Heart left ventricle (tissue), 16 donors: ENCODE measurements at regions of chr13 and their contacts with region 1.

Region 1: GRCh38 chr13:21060987-21061763 is at the start of gene LATS2:
- DNase-seq: peak; percentile 97 to 98 (median 98)
- ATAC-seq: peak; percentile 96 to 98 (median 96)
- H3K4me3 ChIP-seq: peak within 1 kb of the TSS; percentile 73 to 99 (median 96)
- H3K27ac ChIP-seq: peak within 1 kb of the TSS; percentile 98 to 100 (median 100)
- H3K4me1 ChIP-seq: peaks cover 0 to 53% (median 40%) of the 10 kb centered on the region in 12 donors
- H3K27me3 ChIP-seq: no peaks in the 10 kb centered on the region
- CTCF ChIP-seq: peak in 9 of 12 donors; percentile 5 to 75 (median 46)
- POLR2A ChIP-seq: peak; percentile 49 to 96
- total RNA-seq, gene LATS2: 16.6 to 35.6 (median 27.1) TPM

Region 2: DNA sequence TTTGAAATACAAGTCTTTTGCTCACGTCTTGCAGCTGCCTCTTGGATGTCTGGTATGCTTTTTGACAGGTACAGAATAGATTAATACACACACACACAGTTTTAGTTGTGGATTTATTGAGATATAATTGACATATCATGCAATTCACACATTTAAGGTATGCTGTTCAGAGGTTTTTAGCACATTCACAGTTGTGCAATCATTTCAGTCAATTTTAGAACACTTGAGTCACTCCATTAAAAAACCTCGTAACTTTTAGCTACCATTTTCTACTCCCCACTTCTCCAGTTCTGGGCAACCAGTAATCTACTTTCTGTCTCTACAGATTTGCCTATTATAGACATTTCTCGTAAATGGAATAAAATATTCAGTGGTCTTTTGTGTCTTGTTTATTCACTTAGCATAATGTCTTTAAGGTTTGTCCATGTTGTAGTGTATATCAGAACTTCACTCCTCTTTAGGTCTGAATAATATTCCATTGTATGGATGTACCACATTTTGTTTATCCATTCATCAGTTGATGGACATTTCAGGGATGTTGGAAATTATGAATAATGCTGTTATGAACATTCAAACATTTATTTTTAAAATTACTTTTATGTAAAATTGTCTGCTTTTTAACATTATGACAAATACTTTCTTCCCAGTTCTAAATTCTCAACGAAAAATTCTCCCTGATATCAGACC is 1105.2 kb before region 1 on chr13:
- intact Hi-C with region 1: no loop called
- DNase-seq: no peak
- ATAC-seq: no peak
- H3K4me3 ChIP-seq: no peak overlapping the region
- H3K27ac ChIP-seq: no peak overlapping the region
- H3K4me1 ChIP-seq: peaks cover 0 to 25% (median 14%) of the 10 kb centered on the region in 12 donors
- H3K27me3 ChIP-seq: no peaks in the 10 kb centered on the region
- CTCF ChIP-seq: no peak
- POLR2A ChIP-seq: no peak

Region 3: GRCh38 chr13:20940083-20940880 is 120.9 kb before region 1 on chr13:
- intact Hi-C with region 1: loop called in 8 of 10 experiments (anchors 1 to 10 kb)
- DNase-seq: no peak
- ATAC-seq: no peak
- H3K4me3 ChIP-seq: no peak overlapping the region
- H3K27ac ChIP-seq: peak overlapping the region in 8 of 12 donors; percentile 22 to 78 (median 44)
- H3K4me1 ChIP-seq: peaks cover 0 to 13% (median 8%) of the 10 kb centered on the region in 12 donors
- H3K27me3 ChIP-seq: peaks cover 0 to 5% (median 0%) of the 10 kb centered on the region in 9 donors
- CTCF ChIP-seq: no peak
- POLR2A ChIP-seq: no peak

Region 4: GRCh38 chr13:20945952-20946383 is 115.2 kb before region 1 on chr13:
- intact Hi-C with region 1: loop called in 8 of 10 experiments (anchors 1 to 10 kb)
- DNase-seq: peak in 3 of 5 donors; percentile 20 to 42 (median 23)
- ATAC-seq: peak in 3 of 4 donors; percentile 37 to 46 (median 38)
- H3K4me3 ChIP-seq: peak overlapping the region in 9 of 12 donors; percentile 10 to 40 (median 28)
- H3K27ac ChIP-seq: no peak overlapping the region
- H3K4me1 ChIP-seq: peaks cover 0 to 15% (median 2%) of the 10 kb centered on the region in 12 donors
- H3K27me3 ChIP-seq: peaks cover 0 to 14% (median 4%) of the 10 kb centered on the region in 9 donors
- CTCF ChIP-seq: no peak
- POLR2A ChIP-seq: no peak

Region 5: GRCh38 chr13:21034603-21035191 is 26.5 kb before region 1 on chr13:
- intact Hi-C with region 1: loop called in 1 of 10 experiments (anchors 2 kb)
- DNase-seq: peak in 3 of 5 donors; percentile 51 to 57 (median 52)
- ATAC-seq: peak; percentile 53 to 79 (median 66)
- H3K4me3 ChIP-seq: no peak overlapping the region
- H3K27ac ChIP-seq: peak overlapping the region; percentile 2 to 87 (median 76)
- H3K4me1 ChIP-seq: peaks cover 17 to 87% (median 72%) of the 10 kb centered on the region in 12 donors
- H3K27me3 ChIP-seq: no peaks in the 10 kb centered on the region
- CTCF ChIP-seq: peak in 11 of 12 donors; percentile 9 to 65 (median 45)
- POLR2A ChIP-seq: no peak

Region 6: GRCh38 chr13:21043898-21044297 is 17.3 kb before region 1 on chr13:
- intact Hi-C with region 1: loop called in 1 of 10 experiments (anchors 2 kb)
- DNase-seq: no peak
- ATAC-seq: peak; percentile 57 to 88 (median 75)
- H3K4me3 ChIP-seq: peak overlapping the region in 2 of 12 donors; percentile 20 to 33
- H3K27ac ChIP-seq: peak overlapping the region in 11 of 12 donors; percentile 4 to 77 (median 51)
- H3K4me1 ChIP-seq: peaks cover 0 to 94% (median 78%) of the 10 kb centered on the region in 12 donors
- H3K27me3 ChIP-seq: no peaks in the 10 kb centered on the region
- CTCF ChIP-seq: no peak
- POLR2A ChIP-seq: no peak

Region 7: DNA sequence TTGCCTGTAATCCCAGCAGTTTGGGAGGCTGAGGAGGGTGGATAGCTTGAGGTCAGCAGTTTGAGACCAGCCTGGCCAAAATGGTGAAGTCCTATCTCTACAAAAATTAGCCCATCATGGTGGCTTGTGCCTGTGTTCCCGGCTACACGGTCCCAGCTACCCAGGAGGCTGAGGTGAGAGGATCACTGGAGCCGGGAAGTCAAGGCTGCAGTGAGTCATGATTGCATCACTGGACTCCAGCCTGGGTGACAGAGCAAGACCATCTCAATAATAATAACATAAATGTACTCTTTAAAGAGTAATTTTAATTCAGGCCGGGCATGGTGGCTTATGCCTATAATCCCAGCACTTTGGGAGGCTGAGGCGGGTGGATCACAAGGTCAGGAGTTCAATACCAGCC is 76.5 kb after region 1 on chr13:
- intact Hi-C with region 1: loop called in 1 of 10 experiments (anchors 5 kb)
- DNase-seq: no peak
- ATAC-seq: no peak
- H3K4me3 ChIP-seq: no peak overlapping the region
- H3K27ac ChIP-seq: no peak overlapping the region
- H3K4me1 ChIP-seq: peaks cover 6 to 22% (median 21%) of the 10 kb centered on the region in 12 donors
- H3K27me3 ChIP-seq: no peaks in the 10 kb centered on the region
- CTCF ChIP-seq: no peak
- POLR2A ChIP-seq: no peak

Region 8: GRCh38 chr13:21176220-21176982 is 115.2 kb after region 1 on chr13 and contains the starts of genes MRPL57 and SKA3:
- intact Hi-C with region 1: loop called in 2 of 10 experiments (anchors 2 to 10 kb)
- DNase-seq: peak; percentile 90 to 96 (median 93)
- ATAC-seq: peak; percentile 98
- H3K4me3 ChIP-seq: peak within 1 kb of the TSS; percentile 74 to 99 (median 85)
- H3K27ac ChIP-seq: peak within 1 kb of the TSS; percentile 94 to 99 (median 96)
- H3K4me1 ChIP-seq: peaks cover 0 to 21% (median 14%) of the 10 kb centered on the region in 12 donors
- H3K27me3 ChIP-seq: no peaks in the 10 kb centered on the region
- CTCF ChIP-seq: peak in 4 of 12 donors; percentile 11 to 35 (median 16)
- POLR2A ChIP-seq: peak in 1 of 2 donors; percentile 95
- total RNA-seq, gene MRPL57: 19.0 to 51.6 (median 22.5) TPM
- total RNA-seq, gene SKA3: 0.33 to 4.5 (median 0.59) TPM in 6 of 9 donors, not detected in the others